ENCODE measurements at regions of chr19 and their contacts with region 1.

Region 1: GRCh38 chr19:48333467-48334384 is 8.4 kb downstream of the EMP3 start:
- DNase-seq: peak; percentile 97
- ATAC-seq: peak; percentile 72
- H3K4me3 Mint-ChIP-seq: peak overlapping the region; percentile 97
- H3K27ac Mint-ChIP-seq: peak overlapping the region; percentile 98
- H3K4me1 Mint-ChIP-seq: peaks cover 49% of the 10 kb centered on the region
- H3K27me3 Mint-ChIP-seq: no peaks in the 10 kb centered on the region

Region 2: GRCh38 chr19:48170038-48170812 is 163.5 kb before region 1 on chr19 and contains the starts of genes LIG1 and ZSWIM9:
- CTCF ChIA-PET with region 1: no interaction called
- POLR2A ChIA-PET with region 1: no interaction called
- intact Hi-C with region 1: loop called (anchors 1 to 5 kb)
- DNase-seq: peak; percentile 96
- ATAC-seq: peak; percentile 90
- H3K4me3 Mint-ChIP-seq: peak within 1 kb of the TSS; percentile 79
- H3K27ac Mint-ChIP-seq: peak within 1 kb of the TSS; percentile 95
- H3K4me1 Mint-ChIP-seq: peaks cover 30% of the 10 kb centered on the region
- H3K27me3 Mint-ChIP-seq: no peaks in the 10 kb centered on the region
- total RNA-seq, gene LIG1: 193 to 194 TPM
- total RNA-seq, gene ZSWIM9: 7.4 to 10.9 TPM

Region 3: GRCh38 chr19:48290771-48291488 is 42.8 kb before region 1 on chr19:
- CTCF ChIA-PET with region 1: interaction called, 3 read pairs
- POLR2A ChIA-PET with region 1: no interaction called
- intact Hi-C with region 1: loop called in 1 of 2 experiments (anchors 1 kb)
- DNase-seq: peak; percentile 74
- ATAC-seq: peak; percentile 53
- H3K4me3 Mint-ChIP-seq: peak overlapping the region; percentile 64
- H3K27ac Mint-ChIP-seq: no peak overlapping the region
- H3K4me1 Mint-ChIP-seq: peaks cover 3% of the 10 kb centered on the region
- H3K27me3 Mint-ChIP-seq: peaks cover under 1% of the 10 kb centered on the region

Region 4: DNA sequence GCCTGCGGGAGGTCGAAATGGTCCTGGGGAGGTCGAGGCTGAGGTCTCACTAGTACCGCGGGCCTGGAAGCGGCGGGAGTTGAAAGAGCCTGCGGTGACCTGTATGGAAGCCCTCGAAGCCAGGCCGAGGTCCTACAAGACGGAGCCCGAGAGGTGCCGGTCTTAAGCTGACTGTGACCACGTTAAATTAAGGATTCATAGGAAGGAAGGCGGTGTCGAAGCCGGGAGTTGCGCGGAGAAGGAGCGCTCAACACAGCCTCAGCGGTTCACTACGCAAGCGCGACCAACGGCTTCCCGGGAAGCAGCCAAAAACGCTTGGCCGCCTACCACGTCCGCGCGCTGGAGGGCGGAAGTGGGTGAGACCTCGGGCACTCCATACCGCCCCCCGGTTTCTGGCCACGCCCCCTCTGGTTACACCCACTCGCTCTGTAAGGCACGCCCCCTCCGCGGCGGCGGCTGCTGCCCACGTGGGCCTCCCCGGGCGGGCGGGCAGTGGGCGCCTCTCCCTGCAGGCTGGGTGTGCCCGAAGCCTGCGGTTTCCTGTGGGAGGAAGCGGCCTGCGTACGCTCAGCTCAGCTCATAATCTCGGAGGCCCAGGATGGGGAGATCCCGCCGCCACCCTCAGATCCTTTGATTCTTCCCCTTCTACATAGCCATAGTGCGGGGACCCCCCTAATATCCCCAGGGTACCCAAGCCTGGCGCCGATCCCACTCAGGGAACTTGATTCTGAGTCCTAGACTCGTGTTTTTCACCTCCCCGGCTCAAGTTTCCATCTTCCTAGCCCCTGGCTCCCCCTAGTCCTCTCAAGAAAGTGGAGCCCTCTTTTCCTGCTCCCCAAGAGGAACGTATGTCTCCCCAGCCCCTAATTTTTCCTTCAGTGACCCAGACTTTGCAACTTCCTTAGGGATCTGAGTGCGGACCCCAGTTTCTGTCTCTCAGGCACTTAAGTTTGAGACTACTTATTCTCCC is 11.8 kb before region 1 on chr19:
- CTCF ChIA-PET with region 1: interaction called, 55 read pairs
- POLR2A ChIA-PET with region 1: interaction called, 23 read pairs
- intact Hi-C with region 1: loop called (anchors 1 kb)
- DNase-seq: peak; percentile 99
- ATAC-seq: peak; percentile 68
- H3K4me3 Mint-ChIP-seq: peak overlapping the region; percentile 82
- H3K27ac Mint-ChIP-seq: peak overlapping the region; percentile 97
- H3K4me1 Mint-ChIP-seq: peaks cover 56% of the 10 kb centered on the region
- H3K27me3 Mint-ChIP-seq: no peaks in the 10 kb centered on the region

Region 5: DNA sequence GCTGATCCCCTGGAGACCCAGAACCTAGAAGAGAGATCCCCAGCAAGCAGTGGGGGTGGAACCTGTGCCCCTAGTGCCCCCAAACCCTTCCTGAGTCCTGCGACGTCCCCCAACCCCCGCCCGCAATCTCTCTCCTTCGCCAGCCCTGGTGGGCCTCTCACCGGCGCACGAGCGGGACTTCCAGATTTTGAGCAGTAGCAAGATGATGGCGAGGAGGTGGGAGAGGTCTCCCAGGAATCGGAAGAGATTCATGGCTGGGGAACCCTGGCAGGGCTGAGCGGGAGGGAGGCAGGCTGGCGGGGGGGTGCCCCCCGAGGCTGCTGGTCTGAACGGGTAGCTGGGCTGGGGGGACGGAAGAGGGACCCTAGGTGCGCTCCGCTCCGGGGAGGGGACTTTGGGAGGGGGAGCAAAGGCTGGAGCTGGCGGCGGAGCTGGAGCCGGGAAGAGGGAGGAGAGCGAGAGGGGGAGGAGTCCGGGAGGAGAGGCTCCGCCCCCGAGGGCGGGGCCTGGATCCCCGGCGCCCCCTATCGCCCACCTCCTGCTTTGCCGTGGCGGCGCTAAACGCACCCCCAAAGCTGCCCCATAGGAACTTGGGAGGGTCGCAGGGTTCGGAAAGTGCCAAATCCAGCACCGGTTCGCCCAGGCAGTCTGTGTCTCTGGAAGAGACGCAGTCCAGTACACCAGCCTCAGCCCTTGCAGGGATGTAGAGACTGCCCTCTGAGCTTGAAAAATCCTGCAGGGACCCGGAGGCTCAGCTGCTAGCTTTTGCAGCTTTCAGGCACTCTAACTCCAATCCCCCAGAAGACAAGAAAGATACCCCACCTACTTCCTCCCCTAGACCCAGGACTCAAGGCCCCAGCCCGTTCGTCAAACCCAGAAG is 57.6 kb after region 1 on chr19 and contains the start of gene KDELR1:
- CTCF ChIA-PET with region 1: interaction called, 14 read pairs
- POLR2A ChIA-PET with region 1: no interaction called
- intact Hi-C with region 1: loop called in 1 of 2 experiments (anchors 5 kb)
- DNase-seq: peak; percentile 85
- ATAC-seq: peak; percentile 82
- H3K4me3 Mint-ChIP-seq: peak within 1 kb of the TSS; percentile 92
- H3K27ac Mint-ChIP-seq: peak within 1 kb of the TSS; percentile 93
- H3K4me1 Mint-ChIP-seq: peaks cover 17% of the 10 kb centered on the region
- H3K27me3 Mint-ChIP-seq: peaks cover 19% of the 10 kb centered on the region
- total RNA-seq, gene KDELR1: 69.5 to 78.8 TPM

Region 6: GRCh38 chr19:48445606-48446481 is 112.1 kb after region 1 on chr19 and contains the start of gene GRWD1:
- CTCF ChIA-PET with region 1: interaction called, 3 read pairs
- POLR2A ChIA-PET with region 1: no interaction called
- intact Hi-C with region 1: loop called in 1 of 2 experiments (anchors 1 kb)
- DNase-seq: peak; percentile 97
- ATAC-seq: peak; percentile 98
- H3K4me3 Mint-ChIP-seq: peak within 1 kb of the TSS; percentile 86
- H3K27ac Mint-ChIP-seq: peak within 1 kb of the TSS; percentile 89
- H3K4me1 Mint-ChIP-seq: peaks cover 37% of the 10 kb centered on the region
- H3K27me3 Mint-ChIP-seq: peaks cover 20% of the 10 kb centered on the region
- total RNA-seq, gene GRWD1: 43.4 to 51.3 TPM

Region 7: GRCh38 chr19:48872182-48872883 is 538.6 kb after region 1 on chr19 and contains the start of gene PPP1R15A:
- CTCF ChIA-PET with region 1: no interaction called
- POLR2A ChIA-PET with region 1: no interaction called
- intact Hi-C with region 1: loop called in 1 of 2 experiments (anchors 5 kb)
- DNase-seq: peak; percentile 99
- ATAC-seq: peak; percentile 50
- H3K4me3 Mint-ChIP-seq: peak within 1 kb of the TSS; percentile 98
- H3K27ac Mint-ChIP-seq: peak within 1 kb of the TSS; percentile 99
- H3K4me1 Mint-ChIP-seq: peaks cover 41% of the 10 kb centered on the region
- H3K27me3 Mint-ChIP-seq: no peaks in the 10 kb centered on the region
- total RNA-seq, gene PPP1R15A: 51.6 to 62.4 TPM

Measured in activated CD4-positive, alpha-beta T cell treated with anti-CD3 and anti-CD28 coated beads for 36 hours (primary cell).